ENCODE measurements at regions of chr19 and their contacts with region 1.

Region 1: GRCh38 chr19:55830656-55831055 is 1.1 kb downstream of the NLRP11 start:
- DNase-seq: peak; percentile 97
- H3K4me3 ChIP-seq: peak overlapping the region; percentile 93
- H3K27ac ChIP-seq: peak overlapping the region; percentile 89
- H3K4me1 ChIP-seq: peaks cover 39% of the 10 kb centered on the region
- CTCF ChIP-seq: no peak

Region 2: DNA sequence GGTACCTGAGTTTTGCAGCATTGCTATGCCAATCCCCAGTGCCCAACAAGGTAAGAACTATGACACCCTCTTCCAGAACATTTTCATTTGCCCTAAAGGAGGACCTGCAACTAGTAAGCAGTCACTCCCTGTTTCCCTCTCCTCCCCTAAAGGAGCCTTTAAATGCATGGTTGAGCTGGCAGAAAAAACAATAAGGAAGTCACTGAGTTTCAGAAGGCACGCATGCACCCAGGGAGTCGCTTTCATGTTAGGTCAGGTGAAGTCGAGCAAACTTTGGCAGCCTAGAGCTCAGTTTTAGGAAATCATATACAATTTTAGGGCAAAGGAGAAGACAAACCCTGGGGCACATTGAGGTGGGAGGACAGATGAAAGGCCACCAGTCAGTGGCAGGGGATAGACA is 10.6 kb before region 1 on chr19:
- CTCF ChIA-PET with region 1: interaction called, 4 read pairs
- POLR2A ChIA-PET with region 1: interaction called, 32 read pairs
- intact Hi-C with region 1: no loop called
- DNase-seq: peak; percentile 66
- H3K4me3 ChIP-seq: peak overlapping the region; percentile 62
- H3K27ac ChIP-seq: peak overlapping the region; percentile 90
- H3K4me1 ChIP-seq: peaks cover 70% of the 10 kb centered on the region
- CTCF ChIP-seq: no peak

Region 3: GRCh38 chr19:55857149-55857548 is 26.5 kb after region 1 on chr19:
- CTCF ChIA-PET with region 1: interaction called, 3 read pairs
- POLR2A ChIA-PET with region 1: interaction called, 43 read pairs
- intact Hi-C with region 1: loop called (anchors 2 kb)
- DNase-seq: peak; percentile 91
- H3K4me3 ChIP-seq: peak overlapping the region; percentile 68
- H3K27ac ChIP-seq: peak overlapping the region; percentile 88
- H3K4me1 ChIP-seq: peaks cover 97% of the 10 kb centered on the region
- CTCF ChIP-seq: no peak

Region 4: GRCh38 chr19:55930996-55931515 is 100.4 kb after region 1 on chr19:
- CTCF ChIA-PET with region 1: no interaction called
- POLR2A ChIA-PET with region 1: no interaction called
- intact Hi-C with region 1: no loop called
- DNase-seq: no peak
- H3K4me3 ChIP-seq: no peak overlapping the region
- H3K27ac ChIP-seq: no peak overlapping the region
- H3K4me1 ChIP-seq: no peaks in the 10 kb centered on the region
- CTCF ChIP-seq: no peak

Measured in OCI-LY7 (cell line).